Left ventricle myocardium inferior (tissue), 1 donor: ENCODE measurements at regions of chr15 and their contacts with region 1.

Region 1: GRCh38 chr15:89057504-89058133 is 30.6 kb upstream of the ABHD2 start:
- DNase-seq: peak; percentile 83
- H3K4me3 ChIP-seq: no peak overlapping the region
- H3K27ac ChIP-seq: no peak overlapping the region
- H3K4me1 ChIP-seq: peaks cover 5% of the 10 kb centered on the region
- H3K27me3 ChIP-seq: no peaks in the 10 kb centered on the region
- CTCF ChIP-seq: peak; percentile 100

Region 2: GRCh38 chr15:88664151-88664778 is 393.4 kb before region 1 on chr15:
- intact Hi-C with region 1: no loop called
- DNase-seq: no peak
- H3K4me3 ChIP-seq: no peak overlapping the region
- H3K27ac ChIP-seq: no peak overlapping the region
- H3K4me1 ChIP-seq: peaks cover 9% of the 10 kb centered on the region
- H3K27me3 ChIP-seq: peaks cover 21% of the 10 kb centered on the region
- CTCF ChIP-seq: peak; percentile 42

Region 3: DNA sequence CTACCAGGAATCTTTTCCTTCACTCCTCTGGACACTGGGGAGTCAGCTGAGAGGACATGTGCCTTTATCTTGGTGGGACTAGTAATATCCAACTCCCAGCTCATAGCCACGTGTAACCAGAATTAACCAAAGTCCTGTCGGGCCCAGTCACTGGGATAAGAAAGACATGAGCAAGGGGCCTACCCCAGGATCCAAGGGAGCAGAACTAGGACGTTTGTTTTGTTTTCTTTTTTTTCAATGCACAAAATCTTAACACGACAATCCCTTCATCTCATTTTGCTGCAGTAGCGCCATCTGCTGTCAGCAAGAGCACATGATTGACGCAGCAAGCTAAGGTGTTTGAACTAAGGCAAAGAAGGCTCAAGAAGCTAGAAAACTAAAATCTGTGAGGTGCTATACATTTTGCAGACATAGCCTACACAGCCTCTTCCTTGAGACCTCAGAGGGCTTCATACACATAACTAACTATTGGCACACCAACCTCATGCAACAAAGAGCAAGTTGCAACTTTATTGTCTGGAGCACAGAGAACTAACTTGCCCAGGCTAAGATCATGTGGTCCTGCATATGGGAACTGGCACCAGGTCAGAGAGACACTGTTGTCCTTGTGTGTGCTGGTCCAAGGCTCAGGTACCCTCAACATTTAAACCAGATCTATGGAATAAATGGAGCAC is 120.2 kb after region 1 on chr15:
- intact Hi-C with region 1: loop called (anchors 2 kb)
- DNase-seq: peak; percentile 47
- H3K4me3 ChIP-seq: no peak overlapping the region
- H3K27ac ChIP-seq: peak overlapping the region; percentile 45
- H3K4me1 ChIP-seq: peaks cover 50% of the 10 kb centered on the region
- H3K27me3 ChIP-seq: no peaks in the 10 kb centered on the region
- CTCF ChIP-seq: peak; percentile 85